CD8-positive, alpha-beta T cell (primary cell): ENCODE measurements at regions of chr17 and their contacts with region 1.

Region 1: DNA sequence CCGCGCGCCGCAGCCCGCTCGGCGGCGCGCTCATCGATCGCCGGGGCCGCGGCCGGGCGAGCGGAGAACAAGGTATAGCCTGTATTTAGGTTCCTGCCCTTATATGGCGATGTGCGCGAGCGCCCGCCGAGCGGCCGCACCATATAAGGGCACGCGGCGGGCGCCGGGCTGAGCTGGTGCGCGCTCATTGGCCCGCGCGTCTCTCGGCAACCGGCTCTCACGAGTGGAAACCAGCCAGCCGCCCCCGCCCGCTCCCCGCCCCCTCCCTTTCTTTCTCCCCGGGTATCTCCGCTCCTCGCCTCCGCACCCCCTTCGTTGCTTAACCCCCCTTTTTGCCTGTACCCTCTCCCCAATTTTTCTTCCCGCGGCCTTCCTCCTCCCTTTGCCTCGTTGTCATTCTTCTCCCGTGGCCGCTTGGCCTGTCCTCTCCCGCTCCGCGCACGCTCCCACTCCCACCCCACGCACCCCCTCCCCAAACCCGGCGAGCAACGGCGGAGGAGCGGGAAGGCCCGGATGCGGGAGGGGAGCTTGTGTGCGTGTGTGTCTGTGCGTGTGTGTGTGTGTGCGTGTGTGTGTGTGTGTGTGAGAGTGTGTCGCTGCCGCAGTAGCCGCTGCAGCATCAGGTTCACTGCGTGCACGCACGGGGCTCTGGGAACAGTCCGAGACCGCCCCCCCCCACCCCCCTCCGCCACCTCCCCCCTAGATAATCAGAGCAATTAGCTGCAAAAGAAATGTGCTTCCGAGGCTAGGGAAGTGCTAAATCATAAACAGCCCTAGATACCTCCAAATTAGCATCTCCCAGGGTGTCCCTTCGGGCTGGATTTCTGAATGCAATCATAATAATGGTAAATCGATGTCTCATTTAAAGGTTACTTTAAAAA is 13.5 kb upstream of the CBX8 start:
- DNase-seq: peak; percentile 48 to 91 (median 74)
- ATAC-seq: peak; percentile 91
- H3K4me3 ChIP-seq: no peak overlapping the region
- H3K4me3 Mint-ChIP-seq: no peak overlapping the region
- H3K27ac ChIP-seq: no peak overlapping the region
- H3K27ac Mint-ChIP-seq: no peak overlapping the region
- H3K4me1 ChIP-seq: peaks cover 40% of the 10 kb centered on the region
- H3K4me1 Mint-ChIP-seq: peaks cover 28% of the 10 kb centered on the region
- H3K27me3 ChIP-seq: peaks cover 75 to 82% of the 10 kb centered on the region in 2 experiments
- H3K27me3 Mint-ChIP-seq: peaks cover 67% of the 10 kb centered on the region
- CTCF ChIP-seq: no peak

Region 2: GRCh38 chr17:79765708-79766107 is 44.7 kb before region 1 on chr17:
- CTCF ChIA-PET with region 1: no interaction called
- POLR2A ChIA-PET with region 1: no interaction called
- intact Hi-C with region 1: no loop called
- DNase-seq: no peak
- ATAC-seq: no peak
- H3K4me3 ChIP-seq: no peak overlapping the region
- H3K4me3 Mint-ChIP-seq: no peak overlapping the region
- H3K27ac ChIP-seq: no peak overlapping the region
- H3K27ac Mint-ChIP-seq: no peak overlapping the region
- H3K4me1 ChIP-seq: no peaks in the 10 kb centered on the region
- H3K4me1 Mint-ChIP-seq: no peaks in the 10 kb centered on the region
- H3K27me3 ChIP-seq: no peaks in the 10 kb centered on the region
- H3K27me3 Mint-ChIP-seq: peaks cover 17% of the 10 kb centered on the region
- CTCF ChIP-seq: no peak

Region 3: GRCh38 chr17:79777894-79778503 is 32.4 kb before region 1 on chr17 and contains the start of gene CBX2:
- CTCF ChIA-PET with region 1: no interaction called
- POLR2A ChIA-PET with region 1: interaction called, 4 read pairs
- intact Hi-C with region 1: loop called (anchors 1 kb)
- DNase-seq: peak; percentile 60 to 89 (median 75)
- ATAC-seq: peak; percentile 86
- H3K4me3 ChIP-seq: peak within 1 kb of the TSS; percentile 36 to 44
- H3K4me3 Mint-ChIP-seq: peak within 1 kb of the TSS; percentile 83
- H3K27ac ChIP-seq: no peak within 1 kb of the TSS
- H3K27ac Mint-ChIP-seq: no peak within 1 kb of the TSS
- H3K4me1 ChIP-seq: peaks cover 34% of the 10 kb centered on the region
- H3K4me1 Mint-ChIP-seq: peaks cover 34% of the 10 kb centered on the region
- H3K27me3 ChIP-seq: peaks cover 20 to 21% of the 10 kb centered on the region in 2 experiments
- H3K27me3 Mint-ChIP-seq: peaks cover 45% of the 10 kb centered on the region
- CTCF ChIP-seq: no peak
- total RNA-seq, gene CBX2: 0.14 to 0.56 TPM